H1 (cell line): ENCODE measurements at regions of chr16 and their contacts with region 1.

Region 1: DNA sequence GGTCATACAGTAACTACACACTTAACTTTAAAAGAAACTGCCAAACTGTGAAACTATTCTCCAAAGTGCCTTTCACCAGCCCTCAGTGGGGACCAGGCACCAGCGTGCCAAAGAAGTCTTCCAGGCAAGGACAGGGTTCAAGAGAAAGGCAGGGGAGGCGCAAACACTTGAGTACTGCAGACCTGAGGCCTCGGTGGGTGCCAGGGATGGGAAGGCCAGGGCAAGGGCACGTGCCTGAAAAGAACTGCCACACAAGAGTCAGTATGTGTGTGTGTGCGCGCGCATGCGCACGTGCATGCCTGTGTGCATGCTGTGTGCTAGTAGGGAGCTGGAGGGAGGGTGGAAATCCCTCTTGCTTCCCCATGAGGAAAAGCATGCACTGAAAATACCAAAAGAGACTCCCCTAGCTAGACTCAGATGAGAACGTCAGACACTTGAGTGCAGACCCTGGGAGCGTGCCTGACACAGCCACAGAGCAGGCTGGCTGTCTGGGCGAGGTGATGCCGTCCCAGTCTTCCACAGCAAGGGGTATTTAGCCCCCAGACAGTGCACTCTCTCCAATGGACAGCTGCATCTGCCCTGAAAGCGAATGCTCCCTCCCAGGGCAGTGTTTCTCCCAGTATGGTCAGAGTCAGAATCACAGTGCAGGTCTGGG is 40.1 kb upstream of the GSG1L start:
- DNase-seq: no peak
- H3K4me3 ChIP-seq: no peak overlapping the region
- H3K27ac ChIP-seq: no peak overlapping the region
- H3K4me1 ChIP-seq: no peaks in the 10 kb centered on the region
- H3K27me3 ChIP-seq: no peaks in the 10 kb centered on the region
- CTCF ChIP-seq: no peak
- EP300 ChIP-seq: no peak
- POLR2A ChIP-seq: no peak
- RAD21 ChIP-seq: no peak

Region 2: GRCh38 chr16:27586711-27587110 is 516.9 kb before region 1 on chr16:
- CTCF ChIA-PET with region 1: no interaction called
- POLR2A ChIA-PET with region 1: no interaction called
- DNase-seq: no peak
- H3K4me3 ChIP-seq: no peak overlapping the region
- H3K27ac ChIP-seq: no peak overlapping the region
- H3K4me1 ChIP-seq: 0 out of 7 replicates have a peak, but pooled peaks cover 0 to 2% (median 0%) of the 10 kb centered on the region in 4 experiments
- H3K27me3 ChIP-seq: no peaks in the 10 kb centered on the region
- CTCF ChIP-seq: no peak
- EP300 ChIP-seq: no peak
- POLR2A ChIP-seq: no peak
- RAD21 ChIP-seq: no peak

Region 3: GRCh38 chr16:28090646-28091377 is 12.8 kb before region 1 on chr16:
- CTCF ChIA-PET with region 1: interaction called, 19 read pairs
- POLR2A ChIA-PET with region 1: no interaction called
- DNase-seq: peak; percentile 66 to 88
- H3K4me3 ChIP-seq: no peak overlapping the region
- H3K27ac ChIP-seq: no peak overlapping the region
- H3K4me1 ChIP-seq: peaks cover 0 to 26% (median 13%) of the 10 kb centered on the region in 4 experiments; a peak in 6 of 7 replicates
- H3K27me3 ChIP-seq: no peaks in the 10 kb centered on the region
- CTCF ChIP-seq: peak; percentile 82 to 99 (median 95)
- EP300 ChIP-seq: no peak
- POLR2A ChIP-seq: no peak
- RAD21 ChIP-seq: peak; percentile 60 to 71

Region 4: DNA sequence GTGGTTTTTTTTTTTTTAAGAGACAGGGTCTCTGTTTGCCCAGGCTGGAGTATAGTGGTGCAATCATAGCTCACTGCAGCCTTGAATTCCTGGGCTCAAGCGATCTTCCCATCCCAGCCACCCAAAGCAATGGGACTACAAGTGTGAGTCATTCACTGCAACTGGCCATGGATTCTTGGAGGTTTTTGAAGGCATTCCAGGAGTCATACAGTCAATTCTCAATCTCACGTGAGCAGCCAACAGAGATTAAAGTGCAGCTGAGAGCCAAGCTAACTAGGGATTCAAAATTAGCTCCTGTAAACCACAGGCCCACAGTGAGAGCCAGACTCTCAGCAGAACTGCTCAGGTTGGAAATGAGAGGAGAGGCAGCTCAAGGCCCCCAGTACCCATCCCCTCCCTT is 77.9 kb after region 1 on chr16:
- CTCF ChIA-PET with region 1: no interaction called
- POLR2A ChIA-PET with region 1: no interaction called
- DNase-seq: no peak
- H3K4me3 ChIP-seq: no peak overlapping the region
- H3K27ac ChIP-seq: no peak overlapping the region
- H3K4me1 ChIP-seq: peaks cover 0 to 9% (median 2%) of the 10 kb centered on the region in 4 experiments; a peak in 2 of 7 replicates
- H3K27me3 ChIP-seq: no peaks in the 10 kb centered on the region
- CTCF ChIP-seq: no peak
- EP300 ChIP-seq: no peak
- POLR2A ChIP-seq: no peak
- RAD21 ChIP-seq: no peak